Lower leg skin (tissue), 4 donors: ENCODE measurements at regions of chr17 and their contacts with region 1.

Region 1: GRCh38 chr17:43694077-43694870 is 32.6 kb upstream of the MEOX1 start:
- DNase-seq: peak; percentile 77 to 92
- H3K4me3 ChIP-seq: no peak overlapping the region
- CTCF ChIP-seq: peak in 2 of 3 donors; percentile 5 to 79
- POLR2A ChIP-seq: no peak

Region 2: DNA sequence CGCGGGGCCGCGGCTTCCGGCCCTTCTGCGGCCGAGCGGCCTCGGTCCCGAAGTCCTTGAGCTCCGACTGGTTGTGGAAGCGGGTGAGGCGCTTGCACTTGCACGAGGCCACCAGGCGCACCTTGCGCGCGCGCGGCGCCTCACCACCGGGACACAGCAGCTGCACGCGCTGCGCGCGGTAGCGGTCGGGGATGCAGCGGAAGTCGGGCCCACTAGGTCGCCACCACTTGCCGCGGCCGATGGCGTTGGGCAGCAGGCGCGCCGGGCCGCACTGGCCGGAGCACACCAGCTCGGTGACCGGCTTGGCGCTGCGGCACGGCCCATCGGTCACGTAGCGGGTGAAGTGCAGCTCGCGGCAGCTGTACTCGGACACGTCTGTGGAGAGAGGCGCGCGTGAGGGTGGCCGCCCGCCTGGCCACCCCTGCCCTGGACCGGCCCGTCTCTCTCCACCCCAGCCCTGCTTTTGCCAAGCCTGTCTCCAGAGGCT is 61.2 kb after region 1 on chr17:
- intact Hi-C with region 1: loop called (anchors 5 kb)
- DNase-seq: peak in 1 of 2 donors; percentile 74
- H3K4me3 ChIP-seq: no peak overlapping the region
- CTCF ChIP-seq: no peak
- POLR2A ChIP-seq: no peak